Activated B cell treated with CpG ODN at 0.5 μM for 24 hours (primary cell): ENCODE measurements at regions of chr17 and their contacts with region 1.

Region 1: DNA sequence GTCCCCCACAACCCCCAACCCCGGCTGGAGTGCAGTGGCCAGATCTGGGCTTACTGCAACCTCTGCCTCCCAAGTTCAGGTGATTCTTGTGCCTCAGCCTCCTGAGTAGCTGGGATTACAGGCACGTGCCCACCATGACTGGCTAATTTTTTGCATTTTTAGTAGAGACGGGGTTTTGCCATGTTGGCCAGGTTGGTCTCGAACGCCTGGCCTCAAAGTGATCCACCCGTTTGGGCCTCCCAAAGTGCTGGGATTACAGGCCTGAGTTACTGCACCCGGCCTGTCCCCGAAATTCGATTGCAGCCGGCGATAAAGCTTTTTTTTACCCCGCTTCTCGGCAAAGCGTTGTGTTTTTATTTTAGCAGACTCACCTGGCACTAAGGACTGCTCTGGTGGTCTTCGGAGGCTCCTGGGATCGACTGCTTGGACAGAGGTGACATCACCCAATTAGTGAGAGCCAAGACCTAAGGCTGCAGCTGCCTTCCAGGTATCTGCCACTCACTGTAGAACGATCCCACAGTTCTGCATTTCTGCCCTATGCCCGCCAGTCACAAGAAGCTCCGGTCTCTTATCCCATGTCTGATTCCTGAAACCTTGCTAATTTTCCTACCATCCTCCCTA is 82.2 kb upstream of the ARL4D start:
- DNase-seq: peak; percentile 31
- ATAC-seq: no peak
- H3K4me3 Mint-ChIP-seq: no peak overlapping the region
- H3K27ac Mint-ChIP-seq: no peak overlapping the region
- H3K4me1 Mint-ChIP-seq: peaks cover 17% of the 10 kb centered on the region
- H3K27me3 Mint-ChIP-seq: no peaks in the 10 kb centered on the region
- CTCF ChIP-seq: no peak

Region 2: DNA sequence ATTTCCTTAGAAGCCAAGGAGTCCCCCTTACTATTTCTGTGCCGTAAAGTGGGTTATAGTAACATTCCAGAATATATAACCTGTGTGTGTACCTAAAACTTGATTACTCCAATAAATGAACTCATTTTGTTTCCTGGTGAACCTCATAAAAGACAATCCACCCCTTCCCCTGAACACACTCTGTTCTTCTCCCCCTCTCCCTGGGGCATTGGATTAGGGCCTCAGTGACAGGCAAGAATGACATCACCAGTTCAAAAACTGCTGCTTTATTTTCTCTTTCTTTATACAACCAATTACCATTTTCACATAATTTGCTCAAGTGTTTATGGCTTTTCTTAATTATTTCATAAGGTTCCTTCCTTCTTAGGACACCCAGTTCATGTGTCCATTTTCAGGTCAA is 369.8 kb before region 1 on chr17:
- CTCF ChIA-PET with region 1: no interaction called
- POLR2A ChIA-PET with region 1: interaction called, 12 read pairs
- intact Hi-C with region 1: no loop called
- DNase-seq: no peak
- ATAC-seq: no peak
- H3K4me3 Mint-ChIP-seq: no peak overlapping the region
- H3K27ac Mint-ChIP-seq: no peak overlapping the region
- H3K4me1 Mint-ChIP-seq: no peaks in the 10 kb centered on the region
- H3K27me3 Mint-ChIP-seq: no peaks in the 10 kb centered on the region
- CTCF ChIP-seq: no peak

Region 3: GRCh38 chr17:43125133-43125966 is 191.3 kb before region 1 on chr17 and contains the start of gene BRCA1:
- CTCF ChIA-PET with region 1: no interaction called
- POLR2A ChIA-PET with region 1: interaction called, 29 read pairs
- intact Hi-C with region 1: no loop called
- DNase-seq: peak; percentile 77
- ATAC-seq: peak; percentile 98
- H3K4me3 Mint-ChIP-seq: peak within 1 kb of the TSS; percentile 98
- H3K27ac Mint-ChIP-seq: peak within 1 kb of the TSS; percentile 90
- H3K4me1 Mint-ChIP-seq: peaks cover 44% of the 10 kb centered on the region
- H3K27me3 Mint-ChIP-seq: no peaks in the 10 kb centered on the region
- CTCF ChIP-seq: no peak
- total RNA-seq, gene BRCA1: 11.9 and 13.3 TPM in 2 replicates

Region 4: DNA sequence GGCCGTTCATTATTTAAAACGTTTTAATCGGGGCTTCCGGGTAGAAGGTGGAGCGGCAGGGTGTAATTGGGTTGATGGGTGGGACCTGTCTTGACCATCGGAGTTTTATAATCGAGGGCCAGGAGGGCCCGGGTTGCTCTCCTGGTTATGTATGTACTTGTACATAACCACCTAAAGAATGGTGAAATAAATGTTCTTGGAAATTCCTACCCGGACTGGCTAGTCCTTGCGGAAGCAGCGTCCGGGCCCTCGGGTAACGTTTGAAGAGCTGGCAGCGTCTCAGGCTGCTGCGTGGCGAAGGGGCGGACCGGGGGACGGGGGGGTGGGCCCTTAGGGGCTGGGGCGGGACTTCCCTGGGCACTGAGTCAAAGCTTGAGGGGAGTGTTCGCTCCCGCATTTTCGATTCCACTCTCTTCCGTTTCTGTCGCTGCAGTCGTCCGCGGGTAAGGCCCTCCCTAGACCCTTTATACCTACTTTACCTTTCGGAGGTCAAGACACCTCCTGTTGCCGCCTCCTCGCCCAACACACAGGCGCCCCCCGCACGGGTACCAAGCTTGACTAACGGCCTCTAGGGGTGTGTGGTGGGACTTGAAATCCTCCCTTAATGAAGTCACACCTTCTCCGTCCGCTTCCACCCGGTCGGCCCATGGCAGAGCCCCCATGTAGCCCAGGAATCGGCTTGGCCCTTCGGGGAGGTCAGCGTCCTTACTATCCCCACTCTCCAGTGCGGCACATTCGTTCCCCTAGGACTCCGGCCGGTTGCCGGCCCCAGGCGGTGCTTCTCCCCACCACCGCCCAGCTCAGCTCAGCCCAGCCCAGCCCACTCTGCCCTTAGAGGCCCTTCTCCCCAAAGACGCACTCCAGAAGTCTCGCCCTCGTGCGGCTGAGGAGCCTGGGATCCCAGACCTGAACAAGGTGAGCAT is 104.9 kb before region 1 on chr17 and contains the start of gene TMEM106A:
- CTCF ChIA-PET with region 1: interaction called, 4 read pairs
- POLR2A ChIA-PET with region 1: interaction called, 359 read pairs
- intact Hi-C with region 1: loop called (anchors 1 kb)
- DNase-seq: peak; percentile 69
- ATAC-seq: peak; percentile 89
- H3K4me3 Mint-ChIP-seq: peak within 1 kb of the TSS; percentile 100
- H3K27ac Mint-ChIP-seq: peak within 1 kb of the TSS; percentile 98
- H3K4me1 Mint-ChIP-seq: peaks cover 45% of the 10 kb centered on the region
- H3K27me3 Mint-ChIP-seq: no peaks in the 10 kb centered on the region
- CTCF ChIP-seq: no peak
- total RNA-seq, gene TMEM106A: 46.0 and 68.0 TPM in 2 replicates

Region 5: DNA sequence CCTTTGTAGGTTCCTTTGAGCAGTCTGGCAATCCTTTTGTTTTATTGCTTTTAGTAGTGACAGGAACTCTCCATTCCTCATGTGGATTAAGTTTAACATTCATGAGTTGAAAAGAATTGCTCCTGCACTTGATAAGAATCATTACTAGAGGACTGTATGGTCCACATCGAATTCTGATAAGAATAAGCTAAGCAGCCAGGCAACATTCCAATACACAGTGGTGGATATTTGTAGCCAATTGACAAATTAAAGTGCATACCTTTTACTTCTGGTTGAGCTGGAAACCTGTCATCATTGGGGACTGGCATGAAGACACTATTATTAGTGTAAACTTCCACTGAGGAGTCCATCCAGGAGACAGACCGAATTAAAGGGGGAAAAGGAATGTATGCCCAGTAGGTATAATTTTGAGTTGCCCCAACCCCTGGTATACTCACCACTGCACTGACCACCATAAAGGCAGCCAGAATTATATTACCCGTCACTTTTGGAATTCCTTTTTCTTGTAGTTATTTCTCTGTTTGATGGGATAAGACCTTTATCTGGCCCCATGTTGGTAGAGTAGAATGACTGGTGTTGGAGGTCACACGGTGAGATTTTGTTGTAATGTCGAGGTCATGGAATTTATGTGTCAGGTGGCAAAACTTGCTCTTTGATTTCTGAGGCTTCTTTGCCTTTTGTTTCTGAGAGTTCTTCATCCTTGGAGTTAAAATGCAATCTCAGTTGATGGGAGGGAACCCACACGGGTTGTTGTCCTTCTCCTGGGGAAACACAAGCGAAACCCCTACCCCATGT is 10.0 kb after region 1 on chr17:
- CTCF ChIA-PET with region 1: no interaction called
- POLR2A ChIA-PET with region 1: no interaction called
- intact Hi-C with region 1: no loop called
- DNase-seq: no peak
- ATAC-seq: no peak
- H3K4me3 Mint-ChIP-seq: no peak overlapping the region
- H3K27ac Mint-ChIP-seq: no peak overlapping the region
- H3K4me1 Mint-ChIP-seq: peaks cover 9% of the 10 kb centered on the region
- H3K27me3 Mint-ChIP-seq: no peaks in the 10 kb centered on the region
- CTCF ChIP-seq: no peak

Region 6: GRCh38 chr17:43360739-43361505 is 44.3 kb after region 1 on chr17:
- CTCF ChIA-PET with region 1: no interaction called
- POLR2A ChIA-PET with region 1: interaction called, 132 read pairs
- intact Hi-C with region 1: loop called (anchors 1 kb)
- DNase-seq: peak; percentile 65
- ATAC-seq: peak; percentile 76
- H3K4me3 Mint-ChIP-seq: peak overlapping the region; percentile 93
- H3K27ac Mint-ChIP-seq: peak overlapping the region; percentile 100
- H3K4me1 Mint-ChIP-seq: peaks cover 15% of the 10 kb centered on the region
- H3K27me3 Mint-ChIP-seq: peaks cover 2% of the 10 kb centered on the region
- CTCF ChIP-seq: no peak

Region 7: GRCh38 chr17:43393944-43394482 is 77.4 kb after region 1 on chr17:
- CTCF ChIA-PET with region 1: no interaction called
- POLR2A ChIA-PET with region 1: interaction called, 29 read pairs
- intact Hi-C with region 1: no loop called
- DNase-seq: peak; percentile 66
- ATAC-seq: peak; percentile 35
- H3K4me3 Mint-ChIP-seq: no peak overlapping the region
- H3K27ac Mint-ChIP-seq: peak overlapping the region; percentile 41
- H3K4me1 Mint-ChIP-seq: peaks cover 42% of the 10 kb centered on the region
- H3K27me3 Mint-ChIP-seq: no peaks in the 10 kb centered on the region
- CTCF ChIP-seq: no peak

Region 8: DNA sequence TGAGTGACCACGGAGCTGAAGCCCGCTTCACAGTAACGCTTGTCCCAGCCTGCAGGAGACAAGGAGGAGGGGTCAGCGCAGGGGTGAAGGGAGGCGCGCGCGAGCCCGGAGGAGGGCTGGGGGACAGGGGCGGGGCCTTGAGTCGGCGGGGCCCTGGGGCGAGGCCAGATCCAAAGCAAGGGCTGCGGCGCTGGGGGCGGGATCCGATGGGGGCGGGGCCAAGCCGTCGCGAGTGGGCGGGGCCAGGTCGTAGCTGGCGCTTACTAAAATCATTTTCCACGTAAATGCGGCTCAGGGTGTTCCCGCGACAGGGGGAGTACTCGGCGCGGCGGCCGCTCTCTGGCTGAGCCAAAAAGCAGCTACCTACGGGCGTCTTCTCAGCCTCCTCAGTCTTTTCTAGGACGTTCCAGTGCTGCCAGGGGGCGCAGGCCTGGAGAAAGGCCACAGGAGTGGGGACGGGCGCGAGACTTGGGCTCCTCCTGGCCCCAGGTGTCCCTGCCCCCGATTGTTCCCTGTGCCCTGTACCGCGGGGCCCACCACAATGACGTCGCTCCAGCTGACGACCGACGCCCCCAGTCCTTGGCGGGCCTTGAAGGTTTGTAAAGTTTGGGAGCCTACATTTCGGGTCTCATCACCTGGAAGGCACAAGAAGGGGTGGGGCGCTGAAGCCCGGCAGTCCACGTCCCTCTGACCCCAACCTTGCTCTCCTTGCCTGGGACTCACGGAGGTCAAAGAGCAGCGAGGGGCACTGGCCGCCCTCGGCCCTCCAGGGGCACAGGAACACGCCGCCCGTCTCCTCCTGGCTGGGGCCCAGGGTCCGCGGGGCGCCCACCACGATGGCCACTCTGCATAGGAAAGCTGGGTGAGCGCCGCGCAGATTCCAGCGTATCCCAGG is 1068.9 kb after region 1 on chr17:
- CTCF ChIA-PET with region 1: no interaction called
- POLR2A ChIA-PET with region 1: no interaction called
- intact Hi-C with region 1: no loop called
- DNase-seq: peak; percentile 67
- ATAC-seq: peak; percentile 97
- H3K4me3 Mint-ChIP-seq: peak overlapping the region; percentile 77
- H3K27ac Mint-ChIP-seq: no peak overlapping the region
- H3K4me1 Mint-ChIP-seq: peaks cover 23% of the 10 kb centered on the region
- H3K27me3 Mint-ChIP-seq: peaks cover 31% of the 10 kb centered on the region
- CTCF ChIP-seq: no peak